Right ventricle myocardium inferior (tissue), 1 donor: ENCODE measurements at regions of chr1 and their contacts with region 1.

Region 1: DNA sequence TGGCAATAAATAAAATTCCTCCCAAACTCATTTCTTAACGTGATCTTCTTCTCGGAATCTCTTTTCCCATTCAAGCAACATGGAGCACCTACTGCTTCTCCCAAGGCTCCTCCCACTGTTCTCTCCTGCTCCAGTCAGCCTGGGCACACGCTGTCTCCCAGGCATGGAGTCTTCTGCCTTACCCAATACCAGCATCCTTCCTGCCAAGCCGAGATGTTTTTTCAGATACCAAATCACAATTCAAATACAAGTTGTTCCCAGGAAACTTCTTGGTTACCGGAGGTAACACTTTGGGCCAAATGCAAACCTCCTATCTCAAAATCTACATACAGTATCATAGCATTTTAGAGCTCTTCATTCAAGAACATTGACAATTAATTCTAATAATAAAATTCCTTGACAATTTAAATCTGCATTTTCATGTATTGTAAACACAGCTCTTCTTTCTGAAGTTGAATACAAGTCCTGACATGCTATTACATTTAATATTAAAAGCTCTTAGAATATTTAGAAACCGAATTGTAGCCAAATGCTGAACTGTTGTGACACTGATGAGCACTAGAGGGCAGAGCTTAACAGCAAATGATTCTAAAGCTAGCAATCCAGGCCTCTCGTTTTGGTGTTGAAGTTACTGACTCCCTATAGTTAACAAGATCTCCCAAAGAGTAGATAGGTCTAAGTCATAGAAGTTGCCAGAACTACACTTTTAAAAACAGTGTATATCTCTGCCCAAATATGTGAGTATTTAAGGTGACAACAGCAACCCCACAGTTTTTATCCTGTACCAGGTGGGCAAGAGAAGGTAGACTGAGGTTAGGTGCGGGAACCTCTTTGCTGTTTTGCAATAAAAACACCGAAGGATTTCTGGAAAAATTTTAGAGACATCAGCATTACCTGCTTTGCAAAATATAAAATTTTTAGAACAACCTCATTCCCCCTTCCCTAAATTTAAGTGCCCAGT is 52.3 kb downstream of the BCAR3 start:
- DNase-seq: no peak
- ATAC-seq: peak; percentile 59

Region 2: DNA sequence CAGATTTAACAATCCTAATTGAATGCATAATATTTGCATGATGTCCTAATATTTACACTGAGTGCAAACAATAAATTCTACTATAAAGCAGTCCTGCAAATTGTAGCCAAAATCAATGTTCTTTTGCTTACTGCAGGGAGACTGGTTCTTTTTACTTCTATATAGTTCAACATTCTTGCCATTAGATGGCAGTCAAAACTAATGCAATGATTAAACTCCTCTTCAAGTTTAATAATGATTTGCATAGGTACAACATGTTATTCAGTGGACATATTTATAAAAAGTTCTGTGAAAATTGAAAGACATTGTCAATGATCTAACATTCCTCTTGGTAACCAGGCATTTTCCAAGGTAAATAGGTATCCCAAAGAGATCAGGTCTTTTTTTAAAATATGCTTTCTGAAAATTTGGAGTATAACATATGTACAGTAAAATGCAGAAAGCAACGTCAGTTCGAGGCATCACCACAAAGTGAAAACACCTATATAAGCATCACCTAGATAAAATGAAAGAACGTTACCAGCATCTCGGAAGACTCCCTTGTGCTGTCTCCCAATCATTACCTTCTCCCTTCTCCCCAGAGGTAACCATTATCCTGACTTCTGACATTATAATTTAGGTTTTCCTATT is 191.3 kb before region 1 on chr1:
- intact Hi-C with region 1: loop called (anchors 5 kb)
- DNase-seq: no peak
- ATAC-seq: no peak